Activated CD4-positive, alpha-beta memory T cell treated with anti-CD3 and anti-CD28 coated beads for 36 hours (primary cell): ENCODE measurements at regions of chr10 and their contacts with region 1.

Region 1: GRCh38 chr10:87094373-87095235 is at the starts of genes GLUD1 and SHLD2:
- DNase-seq: peak; percentile 94
- H3K4me3 Mint-ChIP-seq: peak within 1 kb of the TSS; percentile 97
- H3K27ac Mint-ChIP-seq: peak within 1 kb of the TSS; percentile 95
- H3K4me1 Mint-ChIP-seq: peaks cover 48% of the 10 kb centered on the region
- H3K27me3 Mint-ChIP-seq: no peaks in the 10 kb centered on the region
- total RNA-seq, gene GLUD1: 174 to 180 TPM
- total RNA-seq, gene SHLD2: 32.2 to 32.6 TPM

Region 2: GRCh38 chr10:86710987-86711512 is 383.6 kb before region 1 on chr10:
- CTCF ChIA-PET with region 1: no interaction called
- POLR2A ChIA-PET with region 1: no interaction called
- intact Hi-C with region 1: loop called (anchors 2 kb)
- DNase-seq: peak; percentile 89
- H3K4me3 Mint-ChIP-seq: peak overlapping the region; percentile 75
- H3K27ac Mint-ChIP-seq: peak overlapping the region; percentile 89
- H3K4me1 Mint-ChIP-seq: peaks cover 11% of the 10 kb centered on the region
- H3K27me3 Mint-ChIP-seq: no peaks in the 10 kb centered on the region

Region 3: GRCh38 chr10:86965986-86966654 is 128.5 kb before region 1 on chr10:
- CTCF ChIA-PET with region 1: no interaction called
- POLR2A ChIA-PET with region 1: interaction called, 3 read pairs
- intact Hi-C with region 1: loop called (anchors 1 kb)
- DNase-seq: peak; percentile 49
- H3K4me3 Mint-ChIP-seq: peak overlapping the region; percentile 38
- H3K27ac Mint-ChIP-seq: peak overlapping the region; percentile 69
- H3K4me1 Mint-ChIP-seq: peaks cover 26% of the 10 kb centered on the region
- H3K27me3 Mint-ChIP-seq: peaks cover 2% of the 10 kb centered on the region

Region 4: DNA sequence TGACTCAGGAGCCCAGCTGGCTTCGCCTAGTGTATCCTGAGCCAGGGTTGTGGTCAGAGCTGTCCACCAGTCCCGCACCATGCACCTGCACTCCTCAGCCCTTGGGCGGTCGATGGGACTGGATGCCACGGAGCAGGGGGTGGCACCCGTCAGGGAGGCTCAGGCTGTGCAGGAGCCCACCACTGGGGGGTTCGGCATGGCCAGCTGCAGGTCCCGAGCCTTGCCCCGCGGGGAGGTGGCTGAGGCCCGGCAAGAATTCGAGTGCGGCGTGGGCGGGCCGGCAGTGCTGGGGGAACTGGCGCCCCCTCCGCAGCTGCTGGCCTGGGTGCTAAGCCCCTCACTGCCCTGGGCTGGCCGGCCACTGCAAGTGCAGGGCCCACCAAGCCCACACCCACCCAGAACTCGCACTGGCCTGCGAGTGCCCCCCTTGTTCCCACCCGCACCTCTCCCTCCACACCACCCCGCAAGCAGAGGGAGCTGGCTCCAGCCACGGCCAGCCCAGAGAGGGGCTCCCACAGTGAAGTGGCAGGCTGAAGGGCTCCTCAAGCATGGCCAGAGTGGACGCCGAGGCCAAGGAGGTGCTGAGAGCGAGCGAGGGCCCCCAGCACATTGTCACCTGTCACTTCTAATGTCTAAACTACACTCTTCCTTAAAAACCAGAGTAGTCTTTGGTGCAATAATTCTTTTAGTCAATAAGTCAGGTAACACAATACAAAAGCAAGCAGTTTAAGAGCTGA is 63.5 kb before region 1 on chr10:
- CTCF ChIA-PET with region 1: no interaction called
- POLR2A ChIA-PET with region 1: no interaction called
- intact Hi-C with region 1: loop called (anchors 5 kb)
- DNase-seq: no peak
- H3K4me3 Mint-ChIP-seq: no peak overlapping the region
- H3K27ac Mint-ChIP-seq: no peak overlapping the region
- H3K4me1 Mint-ChIP-seq: no peaks in the 10 kb centered on the region
- H3K27me3 Mint-ChIP-seq: no peaks in the 10 kb centered on the region

Region 5: DNA sequence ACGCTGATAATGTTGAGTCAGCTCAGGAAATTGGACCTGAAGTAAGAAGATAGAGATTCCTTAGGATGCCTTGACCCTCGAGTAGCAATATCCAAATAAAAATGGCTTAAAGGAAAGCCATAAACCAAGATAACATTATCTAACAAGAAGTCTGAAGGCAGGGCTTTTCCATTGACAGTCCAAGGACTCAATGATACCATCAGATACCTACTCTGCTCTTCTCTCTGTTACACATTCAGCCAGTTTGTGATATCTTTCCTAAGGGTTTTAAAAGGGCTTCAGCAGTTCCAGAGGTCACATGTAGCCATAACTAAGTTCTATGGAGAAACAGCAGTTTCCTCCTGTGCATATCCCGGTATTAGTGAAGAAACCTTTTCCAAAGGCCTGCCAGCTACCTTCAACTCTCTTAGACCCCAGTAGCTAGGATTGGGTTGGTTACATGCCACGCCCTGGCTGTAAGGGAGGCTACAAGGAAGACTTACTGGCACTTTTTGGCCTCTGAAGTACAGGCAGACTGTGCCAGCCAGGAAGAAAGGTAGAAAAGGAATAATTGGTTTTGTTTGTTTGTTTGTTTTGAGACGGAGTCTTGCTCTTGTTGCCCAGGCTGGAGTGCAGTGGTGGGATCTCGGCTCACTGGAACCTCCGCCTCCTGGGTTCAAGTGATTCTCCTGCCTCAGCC is 11.0 kb after region 1 on chr10:
- CTCF ChIA-PET with region 1: no interaction called
- POLR2A ChIA-PET with region 1: no interaction called
- intact Hi-C with region 1: no loop called
- DNase-seq: no peak
- H3K4me3 Mint-ChIP-seq: no peak overlapping the region
- H3K27ac Mint-ChIP-seq: no peak overlapping the region
- H3K4me1 Mint-ChIP-seq: peaks cover 5% of the 10 kb centered on the region
- H3K27me3 Mint-ChIP-seq: no peaks in the 10 kb centered on the region

Region 6: GRCh38 chr10:87761892-87762291 is 667.3 kb after region 1 on chr10:
- CTCF ChIA-PET with region 1: no interaction called
- POLR2A ChIA-PET with region 1: no interaction called
- intact Hi-C with region 1: loop called (anchors 5 kb)
- DNase-seq: peak; percentile 75
- H3K4me3 Mint-ChIP-seq: no peak overlapping the region
- H3K27ac Mint-ChIP-seq: peak overlapping the region; percentile 72
- H3K4me1 Mint-ChIP-seq: peaks cover 31% of the 10 kb centered on the region
- H3K27me3 Mint-ChIP-seq: no peaks in the 10 kb centered on the region